ENCODE measurements at regions of chrX and their contacts with region 1.

Region 1: GRCh38 chrX:26651755-26652154 is 435.8 kb downstream of the MAGEB5 start:
- DNase-seq: no peak
- H3K4me3 Mint-ChIP-seq: no peak overlapping the region
- H3K27ac Mint-ChIP-seq: no peak overlapping the region
- H3K4me1 Mint-ChIP-seq: no peaks in the 10 kb centered on the region
- H3K27me3 Mint-ChIP-seq: no peaks in the 10 kb centered on the region

Region 2: GRCh38 chrX:26783512-26784225 is 131.9 kb after region 1 on chrX:
- intact Hi-C with region 1: no loop called
- DNase-seq: no peak
- H3K4me3 Mint-ChIP-seq: no peak overlapping the region
- H3K27ac Mint-ChIP-seq: no peak overlapping the region
- H3K4me1 Mint-ChIP-seq: no peaks in the 10 kb centered on the region
- H3K27me3 Mint-ChIP-seq: no peaks in the 10 kb centered on the region

Region 3: DNA sequence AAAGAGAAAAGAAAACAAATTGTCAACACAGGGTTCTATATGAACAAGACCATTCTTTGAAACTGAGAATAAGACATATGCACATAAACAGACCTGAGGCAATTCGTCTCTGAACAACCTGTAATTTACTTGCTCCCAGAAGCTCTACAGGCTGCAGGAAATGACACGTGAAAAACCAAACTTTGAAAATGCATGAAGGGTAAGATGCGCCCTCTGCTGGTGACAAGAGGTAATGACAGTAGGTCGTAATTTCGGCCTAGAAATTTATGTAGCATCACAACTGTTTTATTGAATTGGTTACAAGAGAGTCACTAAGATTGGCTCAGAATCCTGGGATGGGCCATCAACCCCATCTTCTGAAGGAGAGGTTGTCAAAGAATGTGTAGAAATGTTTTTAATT is 534.9 kb after region 1 on chrX:
- intact Hi-C with region 1: loop called (anchors 5 kb)
- DNase-seq: no peak
- H3K4me3 Mint-ChIP-seq: no peak overlapping the region
- H3K27ac Mint-ChIP-seq: no peak overlapping the region
- H3K4me1 Mint-ChIP-seq: no peaks in the 10 kb centered on the region
- H3K27me3 Mint-ChIP-seq: no peaks in the 10 kb centered on the region

Region 4: DNA sequence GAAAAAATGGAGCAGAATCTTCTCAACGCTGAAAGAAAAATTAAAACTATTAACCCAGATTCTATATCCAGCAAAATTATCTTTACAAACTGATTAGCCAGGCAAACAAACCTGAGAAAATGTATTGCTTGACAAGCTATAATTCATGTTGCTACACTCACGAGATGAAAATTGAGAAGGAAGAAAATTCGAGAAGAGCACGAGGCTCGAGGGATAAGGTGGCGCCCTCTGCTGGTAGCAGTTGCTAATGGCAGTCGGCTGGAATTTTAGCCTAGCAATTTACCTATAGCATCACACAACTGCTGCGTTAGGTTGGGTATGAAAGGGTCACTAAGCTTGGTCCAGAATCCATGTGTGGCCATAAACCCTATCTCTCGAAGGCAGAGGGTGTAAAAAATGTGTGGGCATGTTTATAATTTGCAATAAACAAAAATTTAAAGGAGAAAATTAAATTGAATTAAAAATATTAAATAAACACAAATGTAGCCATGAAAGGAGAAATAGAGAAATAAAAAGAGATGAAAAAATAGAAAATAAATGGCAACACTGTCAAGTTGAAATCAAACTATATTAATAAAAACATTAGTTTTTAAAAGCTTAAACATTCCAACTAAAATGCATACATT is 684.8 kb after region 1 on chrX:
- intact Hi-C with region 1: loop called (anchors 5 kb)
- DNase-seq: peak; percentile 9
- H3K4me3 Mint-ChIP-seq: no peak overlapping the region
- H3K27ac Mint-ChIP-seq: no peak overlapping the region
- H3K4me1 Mint-ChIP-seq: no peaks in the 10 kb centered on the region
- H3K27me3 Mint-ChIP-seq: no peaks in the 10 kb centered on the region